Ascending aorta (tissue), 2 donors: ENCODE measurements at regions of chr10 and their contacts with region 1.

Region 1: GRCh38 chr10:91163269-91163868 is 57.1 kb upstream of the PCGF5 start:
- DNase-seq: peak in 1 of 2 donors; percentile 81
- H3K4me3 ChIP-seq: peak overlapping the region; percentile 81 to 94
- H3K27ac ChIP-seq: peak overlapping the region; percentile 96 to 98
- H3K4me1 ChIP-seq: peaks cover 0 to 9% of the 10 kb centered on the region in 2 donors
- H3K27me3 ChIP-seq: no peaks in the 10 kb centered on the region
- CTCF ChIP-seq: peak in 1 of 3 experiments; percentile 19

Region 2: DNA sequence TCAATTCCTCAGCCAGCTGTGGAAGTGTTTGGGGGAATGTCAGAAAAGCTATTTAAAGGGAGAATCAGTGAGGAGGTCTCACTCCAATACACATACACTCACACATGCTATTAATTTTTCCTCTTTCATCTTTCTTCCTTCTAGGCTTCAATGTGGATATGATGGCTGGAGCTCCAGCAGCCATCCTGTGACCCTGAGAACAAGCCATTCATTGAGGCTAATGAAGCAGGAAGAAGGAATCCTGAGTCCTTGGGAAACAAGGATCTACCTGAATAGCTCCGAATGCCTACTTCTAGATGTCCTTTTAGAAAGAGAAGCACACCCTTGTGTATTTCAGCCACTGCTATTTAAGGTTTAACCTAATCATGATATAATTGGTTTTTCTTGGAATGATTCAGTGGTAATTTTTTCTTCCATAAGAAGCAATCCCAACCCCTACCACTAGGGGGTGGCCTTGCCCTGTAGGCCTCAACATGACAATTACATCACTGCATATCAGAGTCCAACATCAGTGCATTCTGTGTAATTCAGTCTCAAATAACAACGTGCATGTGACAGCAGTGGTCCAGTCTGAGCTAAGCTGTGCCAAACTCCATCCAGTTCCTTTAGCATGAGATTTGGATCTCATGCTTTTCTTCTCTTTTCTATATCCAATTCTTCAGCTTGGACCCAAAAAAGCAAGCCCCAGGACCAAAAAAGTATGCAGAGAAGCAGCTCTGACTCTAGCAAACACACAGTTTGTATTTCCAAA is 157.2 kb before region 1 on chr10:
- intact Hi-C with region 1: loop called (anchors 5 kb)
- DNase-seq: peak in 1 of 2 donors; percentile 85
- H3K4me3 ChIP-seq: no peak overlapping the region
- H3K27ac ChIP-seq: peak overlapping the region; percentile 48 to 70
- H3K4me1 ChIP-seq: peaks cover 0 to 5% of the 10 kb centered on the region in 2 donors
- H3K27me3 ChIP-seq: no peaks in the 10 kb centered on the region
- CTCF ChIP-seq: peak; percentile 87 to 88 (median 88)

Region 3: GRCh38 chr10:91077549-91078071 is 85.8 kb before region 1 on chr10:
- intact Hi-C with region 1: loop called (anchors 2 kb)
- DNase-seq: peak in 1 of 2 donors; percentile 94
- H3K4me3 ChIP-seq: peak overlapping the region in 1 of 2 donors; percentile 34
- H3K27ac ChIP-seq: peak overlapping the region; percentile 83 to 93
- H3K4me1 ChIP-seq: peaks cover 11 to 24% of the 10 kb centered on the region in 2 donors
- H3K27me3 ChIP-seq: no peaks in the 10 kb centered on the region
- CTCF ChIP-seq: no peak

Region 4: DNA sequence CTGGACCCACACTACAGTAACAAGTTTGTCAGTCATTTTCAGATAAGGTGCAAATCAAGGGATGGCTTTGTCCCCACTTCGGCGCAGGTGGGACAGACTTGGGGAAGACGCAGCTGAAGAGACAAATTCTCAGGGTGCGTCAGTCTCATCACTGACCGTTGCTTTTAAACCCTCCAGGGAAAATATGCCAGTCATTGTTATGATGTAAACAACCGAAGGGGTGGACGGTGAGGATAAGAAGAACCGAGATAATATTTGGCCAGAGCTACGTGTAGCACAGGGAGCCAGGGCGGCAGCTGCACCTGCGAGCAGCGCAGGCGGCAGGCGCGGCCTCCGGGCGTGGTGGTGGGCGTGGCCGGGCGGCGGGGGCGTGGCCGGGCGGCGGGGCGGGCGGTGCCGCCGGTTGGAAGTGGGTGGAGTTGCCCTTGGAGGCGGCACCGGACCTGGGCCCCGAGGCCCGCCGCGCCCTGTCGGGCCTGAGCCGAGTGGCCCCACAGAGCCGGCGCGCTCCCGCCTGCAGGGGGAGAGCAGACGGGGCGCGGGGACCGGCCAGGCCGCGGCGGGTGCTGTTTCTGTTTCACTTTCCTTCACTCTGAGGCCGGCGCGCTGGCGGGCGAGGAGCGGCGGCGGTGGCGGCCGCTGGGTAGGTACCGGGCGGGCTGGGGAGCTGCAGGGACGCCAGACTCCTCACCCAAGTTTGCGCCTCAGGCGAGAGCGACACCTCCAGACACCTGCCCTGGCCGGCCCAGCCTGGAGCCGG is 57.0 kb after region 1 on chr10 and contains the start of gene PCGF5:
- intact Hi-C with region 1: loop called (anchors 1 kb)
- DNase-seq: peak; percentile 60 to 94
- H3K4me3 ChIP-seq: peak within 1 kb of the TSS; percentile 75 to 100
- H3K27ac ChIP-seq: peak within 1 kb of the TSS; percentile 88 to 99
- H3K4me1 ChIP-seq: peaks cover 8 to 29% of the 10 kb centered on the region in 2 donors
- H3K27me3 ChIP-seq: no peaks in the 10 kb centered on the region
- CTCF ChIP-seq: peak; percentile 11 to 53 (median 22)
- total RNA-seq, gene PCGF5: 39.8 TPM

Region 5: GRCh38 chr10:91797874-91798648 is 634.7 kb after region 1 on chr10 and contains the start of gene TNKS2:
- intact Hi-C with region 1: loop called (anchors 5 kb)
- DNase-seq: peak; percentile 74 to 97
- H3K4me3 ChIP-seq: peak within 1 kb of the TSS; percentile 96 to 98
- H3K27ac ChIP-seq: peak within 1 kb of the TSS; percentile 93 to 97
- H3K4me1 ChIP-seq: peaks cover 7 to 28% of the 10 kb centered on the region in 2 donors
- H3K27me3 ChIP-seq: no peaks in the 10 kb centered on the region
- CTCF ChIP-seq: no peak
- total RNA-seq, gene TNKS2: 26.4 TPM